Activated CD4-positive, alpha-beta T cell treated with anti-CD3 and anti-CD28 coated beads, Interleukin-2, amount 10 ng/mL, durations not matched to agents 24 days and 14 days (primary cell): ENCODE measurements at regions of chr1 and their contacts with region 1.

Region 1: DNA sequence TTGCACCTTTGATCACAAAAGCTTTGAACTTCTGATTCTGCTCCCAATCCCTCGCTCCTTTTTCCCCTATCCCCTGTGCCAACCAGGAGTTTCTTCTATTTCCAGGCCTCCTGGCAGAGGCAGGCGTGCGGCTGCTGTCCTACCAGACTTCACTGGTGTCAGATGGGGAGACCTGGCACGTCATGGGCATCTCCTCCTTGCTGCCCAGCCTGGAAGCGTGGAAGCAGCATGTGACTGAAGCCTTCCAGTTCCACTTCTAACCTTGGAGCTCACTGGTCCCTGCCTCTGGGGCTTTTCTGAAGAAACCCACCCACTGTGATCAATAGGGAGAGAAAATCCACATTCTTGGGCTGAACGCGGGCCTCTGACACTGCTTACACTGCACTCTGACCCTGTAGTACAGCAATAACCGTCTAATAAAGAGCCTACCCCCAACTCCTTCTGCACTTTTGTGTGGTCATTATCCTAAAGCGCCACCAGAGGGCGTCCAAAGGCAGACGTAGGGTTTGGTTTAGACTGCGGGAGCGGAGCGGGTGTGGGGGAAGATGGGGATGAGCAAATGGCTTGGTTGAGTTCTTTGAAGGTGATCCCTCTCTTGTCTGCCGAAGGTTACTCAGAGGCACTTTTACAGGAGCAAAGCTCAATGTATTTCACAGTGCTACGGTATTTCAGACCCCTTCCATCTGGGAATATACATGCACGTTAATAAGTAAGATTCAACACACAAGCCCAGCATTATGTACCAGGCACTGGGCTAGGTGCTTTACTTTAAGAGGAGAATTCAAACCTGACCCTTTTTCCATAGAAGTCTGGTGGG is 24.7 kb downstream of the HMGCS2 start:
- DNase-seq: peak; percentile 84
- H3K4me3 Mint-ChIP-seq: no peak overlapping the region
- H3K27ac Mint-ChIP-seq: no peak overlapping the region
- H3K4me1 Mint-ChIP-seq: peaks cover 18% of the 10 kb centered on the region
- H3K27me3 Mint-ChIP-seq: no peaks in the 10 kb centered on the region

Region 2: DNA sequence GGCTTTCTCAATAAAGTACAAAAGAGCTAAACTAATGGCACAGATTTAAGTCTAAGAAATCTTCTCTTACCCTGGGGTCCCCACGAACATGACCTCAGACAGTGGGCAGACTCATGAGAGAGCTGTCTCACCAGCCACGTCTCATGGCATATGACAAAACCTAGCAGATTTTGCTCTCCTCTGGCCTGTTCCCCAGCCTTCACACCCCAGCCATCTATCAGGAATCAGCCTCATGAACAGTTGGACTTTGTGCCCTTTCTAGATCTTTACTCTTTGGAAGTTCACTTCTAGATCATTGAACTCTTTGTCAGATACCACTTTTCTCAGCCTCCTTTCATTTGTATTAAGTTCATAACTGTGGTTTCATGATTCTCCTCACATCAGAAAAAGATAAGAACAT is 251.2 kb before region 1 on chr1:
- intact Hi-C with region 1: no loop called
- DNase-seq: no peak
- H3K4me3 Mint-ChIP-seq: no peak overlapping the region
- H3K27ac Mint-ChIP-seq: no peak overlapping the region
- H3K4me1 Mint-ChIP-seq: no peaks in the 10 kb centered on the region
- H3K27me3 Mint-ChIP-seq: peaks cover 6% of the 10 kb centered on the region

Region 3: GRCh38 chr1:119808972-119809550 is 65.1 kb after region 1 on chr1:
- intact Hi-C with region 1: loop called (anchors 5 kb)
- DNase-seq: peak; percentile 89
- H3K4me3 Mint-ChIP-seq: no peak overlapping the region
- H3K27ac Mint-ChIP-seq: no peak overlapping the region
- H3K4me1 Mint-ChIP-seq: peaks cover 4% of the 10 kb centered on the region
- H3K27me3 Mint-ChIP-seq: peaks cover 54% of the 10 kb centered on the region

Region 4: DNA sequence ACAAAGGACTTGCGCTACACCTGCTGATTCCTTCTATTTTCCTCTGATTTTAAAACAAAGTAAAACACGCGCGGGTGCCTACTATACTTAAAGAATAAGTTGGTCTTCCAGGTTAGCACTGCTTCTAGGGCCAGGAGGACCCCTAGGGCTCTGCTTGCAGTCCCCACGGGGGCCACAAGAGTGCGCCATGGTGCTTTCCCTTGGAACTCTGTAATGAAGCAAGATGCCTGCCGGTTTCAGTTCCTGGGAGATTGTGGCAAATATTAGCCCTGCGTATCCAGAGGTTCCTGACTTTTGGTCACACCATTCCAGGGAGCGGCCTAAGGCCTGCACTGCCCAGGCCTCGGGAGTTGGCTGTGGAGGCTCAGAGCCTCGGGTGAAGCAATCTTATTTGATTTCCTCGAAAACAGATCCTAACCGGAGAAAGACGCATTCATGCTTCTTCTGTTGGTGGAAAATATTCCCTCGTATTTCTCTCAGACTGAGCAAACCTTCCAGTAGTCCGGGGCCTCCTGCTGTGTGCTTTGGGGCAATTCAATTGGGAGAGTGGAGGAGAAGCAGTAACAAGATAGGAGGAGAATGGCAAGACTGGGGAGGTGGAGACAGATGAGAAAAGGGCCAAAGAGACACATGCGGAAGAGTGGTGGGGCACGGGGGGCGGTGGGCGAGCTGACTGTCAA is 127.1 kb after region 1 on chr1:
- intact Hi-C with region 1: loop called (anchors 10 kb)
- DNase-seq: peak; percentile 93
- H3K4me3 Mint-ChIP-seq: peak overlapping the region; percentile 36
- H3K27ac Mint-ChIP-seq: no peak overlapping the region
- H3K4me1 Mint-ChIP-seq: peaks cover 11% of the 10 kb centered on the region
- H3K27me3 Mint-ChIP-seq: peaks cover 34% of the 10 kb centered on the region

Region 5: DNA sequence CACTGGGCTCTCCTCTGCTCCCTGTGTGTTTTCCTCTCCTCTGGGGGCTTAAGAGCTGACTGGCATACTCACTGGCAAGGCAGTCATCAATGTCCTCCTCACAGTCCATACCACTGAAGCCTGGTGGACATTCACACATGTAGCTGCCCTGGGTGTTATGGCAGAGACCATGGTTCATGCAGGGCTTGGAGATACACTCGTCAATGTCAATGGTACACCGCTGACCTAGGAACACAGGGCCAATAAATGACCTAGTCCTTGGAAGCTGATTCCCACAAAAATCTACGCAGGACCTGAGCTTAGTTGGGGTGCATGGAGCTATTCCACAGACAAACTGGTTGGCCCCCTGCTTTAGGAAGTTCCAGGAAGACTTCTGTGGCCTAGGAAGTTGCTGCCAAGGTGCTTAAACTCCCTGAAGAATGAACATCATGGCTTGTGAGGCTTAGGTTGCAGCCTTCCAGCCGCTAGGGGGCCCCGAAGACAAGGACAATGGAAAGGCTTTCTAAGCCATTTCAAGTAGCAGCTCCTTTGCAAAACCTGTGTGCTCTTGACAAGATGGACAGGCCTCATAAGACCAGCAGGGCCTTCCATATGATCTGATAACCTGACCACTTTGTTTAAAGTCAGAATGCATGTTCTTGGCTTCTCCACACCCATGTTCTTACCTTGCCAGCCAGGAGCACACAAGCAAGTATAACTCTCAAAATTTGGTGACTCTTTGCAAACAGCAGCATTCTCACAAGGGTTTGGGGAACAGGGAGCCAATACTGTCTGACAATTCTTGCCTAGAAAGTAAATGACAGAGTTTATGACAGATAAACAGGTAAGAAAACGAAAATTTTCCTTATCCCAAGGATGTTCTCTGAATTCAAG is 204.6 kb after region 1 on chr1:
- intact Hi-C with region 1: loop called (anchors 10 kb)
- DNase-seq: peak; percentile 92
- H3K4me3 Mint-ChIP-seq: no peak overlapping the region
- H3K27ac Mint-ChIP-seq: no peak overlapping the region
- H3K4me1 Mint-ChIP-seq: peaks cover 6% of the 10 kb centered on the region
- H3K27me3 Mint-ChIP-seq: no peaks in the 10 kb centered on the region